ENCODE measurements at regions of chr17 and their contacts with region 1.

Region 1: GRCh38 chr17:51153210-51154072 is at the start of gene NME1:
- DNase-seq: peak; percentile 92 to 99 (median 96)
- H3K4me3 ChIP-seq: peak within 1 kb of the TSS; percentile 36
- H3K27ac ChIP-seq: peak within 1 kb of the TSS; percentile 58 to 70
- H3K4me1 ChIP-seq: peaks cover 5% of the 10 kb centered on the region
- H3K27me3 ChIP-seq: no peaks in the 10 kb centered on the region
- CTCF ChIP-seq: peak; percentile 35 to 92 (median 78)
- EP300 ChIP-seq: no peak
- POLR2A ChIP-seq: peak; percentile 39
- total RNA-seq, gene NME1: 17.0 to 83.8 (median 50.5) TPM

Region 2: GRCh38 chr17:50995645-50996044 is 157.8 kb before region 1 on chr17:
- intact Hi-C with region 1: loop called in 3 of 4 experiments (anchors 5 to 10 kb)
- DNase-seq: no peak
- H3K4me3 ChIP-seq: no peak overlapping the region
- H3K27ac ChIP-seq: no peak overlapping the region
- H3K4me1 ChIP-seq: no peaks in the 10 kb centered on the region
- H3K27me3 ChIP-seq: no peaks in the 10 kb centered on the region
- CTCF ChIP-seq: no peak
- EP300 ChIP-seq: no peak
- POLR2A ChIP-seq: no peak

Region 3: DNA sequence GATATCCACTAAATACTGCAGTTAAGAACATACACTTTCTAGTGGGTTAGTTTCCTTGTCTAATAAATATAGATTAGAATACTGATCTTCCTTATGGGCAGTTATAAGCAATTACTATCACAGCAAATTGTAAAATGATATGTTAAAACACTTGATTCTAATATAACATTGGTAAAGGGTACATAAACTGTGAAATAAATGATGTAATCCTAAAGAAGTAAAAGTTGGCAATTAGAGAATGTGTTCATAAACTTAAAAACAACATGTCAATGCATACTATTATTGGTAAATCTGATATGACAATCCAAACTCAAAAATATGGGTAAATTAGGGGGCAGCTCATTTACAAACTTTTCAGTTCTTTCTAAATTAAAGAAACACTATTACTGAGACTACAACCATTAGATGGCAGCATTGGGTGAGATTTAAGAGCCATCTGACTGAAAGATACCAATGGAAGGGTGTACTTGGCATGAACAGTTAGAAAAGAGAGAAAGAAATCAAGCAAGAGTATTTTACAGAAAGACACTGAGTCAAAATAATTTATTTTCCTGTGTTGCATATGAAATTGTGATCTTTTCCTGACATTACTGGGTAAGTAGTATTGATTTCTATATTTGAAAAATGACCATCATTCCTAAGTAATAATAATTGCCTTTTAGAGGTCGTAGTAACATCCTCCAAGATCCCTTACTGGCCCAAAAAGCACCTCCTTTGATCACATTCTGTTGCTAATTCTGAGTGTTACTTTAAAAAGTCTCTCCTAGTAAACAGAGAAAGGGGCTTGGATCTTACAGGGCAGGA is 152.4 kb before region 1 on chr17:
- intact Hi-C with region 1: loop called (anchors 5 to 10 kb)
- DNase-seq: no peak
- H3K4me3 ChIP-seq: no peak overlapping the region
- H3K27ac ChIP-seq: no peak overlapping the region
- H3K4me1 ChIP-seq: no peaks in the 10 kb centered on the region
- H3K27me3 ChIP-seq: no peaks in the 10 kb centered on the region
- CTCF ChIP-seq: peak; percentile 45 to 67 (median 55)
- EP300 ChIP-seq: no peak
- POLR2A ChIP-seq: no peak

Region 4: DNA sequence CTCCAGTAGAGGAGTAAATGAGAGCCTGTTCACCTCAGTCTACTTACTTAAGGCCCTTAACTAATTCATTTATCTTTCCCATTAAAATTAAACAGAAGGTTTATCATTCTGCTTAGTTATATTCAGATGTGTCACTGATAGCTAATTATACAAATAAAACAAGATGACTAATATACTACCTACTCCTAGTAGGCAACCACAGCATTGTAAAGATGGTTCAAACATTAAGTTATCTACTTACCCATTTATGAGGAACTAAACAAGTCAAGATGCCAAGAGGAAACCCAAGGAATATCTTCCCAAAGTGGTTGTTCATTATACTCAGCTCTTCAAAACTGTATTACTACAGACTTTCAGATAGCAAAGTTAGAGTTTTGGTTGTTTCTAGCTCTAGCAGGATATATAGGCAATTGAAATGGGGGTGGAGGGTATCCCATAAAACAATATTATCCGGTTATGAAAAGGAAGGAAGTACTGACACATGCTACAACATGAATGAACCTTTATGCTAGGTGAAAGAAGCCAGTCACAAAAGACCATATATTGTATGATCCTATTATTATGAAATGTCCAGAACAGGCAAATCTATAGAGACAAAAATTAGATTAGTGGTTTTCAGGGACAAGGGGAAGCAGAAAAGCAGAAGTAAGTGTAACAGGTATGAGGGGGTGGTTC is 89.2 kb before region 1 on chr17:
- intact Hi-C with region 1: no loop called
- DNase-seq: no peak
- H3K4me3 ChIP-seq: no peak overlapping the region
- H3K27ac ChIP-seq: no peak overlapping the region
- H3K4me1 ChIP-seq: peaks cover 2% of the 10 kb centered on the region
- H3K27me3 ChIP-seq: no peaks in the 10 kb centered on the region
- CTCF ChIP-seq: no peak
- EP300 ChIP-seq: no peak
- POLR2A ChIP-seq: no peak

Region 5: GRCh38 chr17:51120739-51121617 is 32.5 kb before region 1 on chr17 and contains the start of gene SPAG9:
- intact Hi-C with region 1: loop called in 1 of 4 experiments (anchors 5 kb)
- DNase-seq: peak; percentile 94 to 97 (median 96)
- H3K4me3 ChIP-seq: peak within 1 kb of the TSS; percentile 89
- H3K27ac ChIP-seq: peak within 1 kb of the TSS; percentile 99
- H3K4me1 ChIP-seq: peaks cover 13% of the 10 kb centered on the region
- H3K27me3 ChIP-seq: no peaks in the 10 kb centered on the region
- CTCF ChIP-seq: no peak
- EP300 ChIP-seq: peak; percentile 44
- POLR2A ChIP-seq: peak; percentile 87
- total RNA-seq, gene SPAG9: 63.4 to 103 (median 89.5) TPM